Posterior cingulate gyrus (tissue), 11 donors: ENCODE measurements at regions of chr5 and their contacts with region 1.

Region 1: GRCh38 chr5:151825445-151825844 is 53.7 kb downstream of the G3BP1 start:
- DNase-seq: peak in 9 of 10 donors; percentile 21 to 90 (median 64)

Region 2: DNA sequence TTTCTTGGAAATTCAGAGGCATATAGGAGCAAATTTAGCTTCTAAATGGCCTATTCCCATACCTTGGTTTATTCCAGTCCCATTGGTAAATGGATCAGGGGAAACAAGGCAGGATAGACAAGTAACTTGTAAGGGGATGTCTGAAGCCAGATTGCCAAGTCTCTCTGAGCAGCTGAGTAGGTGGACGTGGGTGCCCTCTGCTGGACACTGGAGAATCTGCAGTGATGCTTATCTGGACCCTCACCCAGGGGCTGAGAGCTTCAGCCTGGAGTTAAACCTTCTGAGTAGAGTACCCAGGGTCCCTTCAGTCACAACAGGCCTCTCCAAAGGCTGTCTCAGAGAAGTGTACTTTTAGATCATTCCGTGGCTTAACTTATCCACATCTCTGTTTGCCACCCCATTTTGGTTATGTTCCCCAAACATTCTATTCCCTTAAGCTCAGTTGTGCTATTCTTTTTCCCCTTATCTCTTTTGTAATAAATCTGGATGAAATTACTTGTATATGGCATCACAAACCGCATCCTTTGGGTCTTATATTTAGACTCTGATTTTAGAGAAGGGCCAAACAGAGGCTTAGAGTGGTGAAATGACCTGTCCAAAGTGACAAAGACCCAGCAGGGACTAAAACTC is 317.5 kb after region 1 on chr5:
- intact Hi-C with region 1: loop called (anchors 1 kb)
- DNase-seq: peak; percentile 33 to 91 (median 66)

Region 3: DNA sequence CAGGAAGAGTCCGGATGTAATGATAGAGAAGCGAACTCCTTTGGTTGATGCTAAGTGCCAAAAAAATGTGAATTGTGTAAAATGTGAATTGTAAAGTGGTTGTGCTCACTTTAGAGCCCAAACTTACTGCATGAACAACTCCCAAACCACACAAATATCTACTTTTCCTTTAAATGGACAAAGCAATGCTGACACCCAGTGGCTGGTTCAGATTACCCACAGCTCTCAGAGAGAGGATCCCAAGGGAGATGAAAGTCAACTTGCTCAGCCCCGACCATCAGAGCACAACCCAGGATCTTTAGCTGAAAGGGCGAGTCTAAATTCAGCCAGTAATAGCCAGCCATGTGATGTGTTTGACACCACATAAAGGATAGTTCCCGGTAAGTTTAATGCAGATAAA is 446.0 kb after region 1 on chr5:
- intact Hi-C with region 1: loop called (anchors 1 kb)
- DNase-seq: peak in 6 of 10 donors; percentile 12 to 75 (median 24)

Region 4: DNA sequence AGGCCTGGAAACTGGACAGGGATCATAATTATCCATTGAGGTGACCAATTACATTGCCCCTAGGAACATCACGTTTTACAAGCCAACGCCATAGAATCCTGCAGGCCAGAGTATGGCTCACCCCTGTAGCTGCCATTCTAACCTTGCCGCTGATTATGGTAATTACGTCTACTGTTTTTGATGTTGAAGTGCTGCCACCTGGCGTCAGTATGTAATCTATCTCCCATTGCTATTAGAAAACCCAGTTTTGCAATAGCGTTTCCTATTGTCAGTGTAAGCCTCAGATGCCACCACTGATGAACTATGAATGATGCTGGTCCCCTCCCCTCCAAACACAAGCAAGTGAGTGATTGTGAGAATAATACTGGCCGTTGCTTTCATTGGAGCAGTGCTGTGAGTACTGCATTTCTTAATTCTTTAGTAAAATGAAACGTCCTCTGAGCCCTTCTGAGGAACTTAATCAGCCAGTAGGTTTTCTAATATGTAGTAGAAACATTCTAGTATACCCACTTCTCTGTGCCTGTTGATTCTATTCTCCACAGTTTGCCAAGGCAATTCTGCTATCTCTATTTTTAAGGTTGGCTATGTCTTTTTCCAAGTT is 680.1 kb after region 1 on chr5:
- intact Hi-C with region 1: loop called (anchors 1 kb)
- DNase-seq: peak in 6 of 10 donors; percentile 25 to 79 (median 69)

Region 5: GRCh38 chr5:152514827-152515397 is 689.5 kb after region 1 on chr5:
- intact Hi-C with region 1: loop called (anchors 2 kb)
- DNase-seq: no peak